Naive thymus-derived CD4-positive, alpha-beta T cell (primary cell): ENCODE measurements at regions of chr2 and their contacts with region 1.

Region 1: DNA sequence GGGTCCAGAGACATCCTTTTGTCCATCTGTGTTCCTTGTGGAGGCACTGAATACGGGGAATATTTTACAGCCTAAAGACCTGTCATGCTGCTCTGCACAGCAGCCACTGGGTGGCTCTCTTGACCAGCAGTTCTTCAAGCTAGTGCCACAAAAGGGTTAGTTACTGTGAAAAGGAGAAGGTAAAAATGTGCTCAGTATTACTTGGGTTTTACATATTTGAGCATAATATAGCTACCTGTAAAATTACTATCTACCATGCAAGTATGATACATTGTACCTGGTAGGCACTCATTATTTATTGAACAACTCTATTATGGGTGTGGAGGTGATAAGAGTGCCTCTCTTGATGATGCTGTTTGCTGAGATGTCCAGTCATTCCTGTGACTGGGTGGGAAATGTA is 23.6 kb downstream of the FZD5 start:
- DNase-seq: peak in 7 of 9 donors; percentile 17 to 50 (median 34)
- ATAC-seq: peak; percentile 85
- H3K4me3 ChIP-seq: no peak overlapping the region
- H3K4me3 Mint-ChIP-seq: no peak overlapping the region
- H3K27ac ChIP-seq: no peak overlapping the region
- H3K27ac Mint-ChIP-seq: peak overlapping the region in 1 of 9 donors; percentile 20
- H3K4me1 ChIP-seq: no peaks in the 10 kb centered on the region
- H3K4me1 Mint-ChIP-seq: no peaks in the 10 kb centered on the region
- H3K27me3 ChIP-seq: no peaks in the 10 kb centered on the region
- H3K27me3 Mint-ChIP-seq: no peaks in the 10 kb centered on the region

Region 2: GRCh38 chr2:207974216-207974605 is 228.1 kb after region 1 on chr2:
- CTCF ChIA-PET with region 1: interaction called, 5 read pairs
- POLR2A ChIA-PET with region 1: no interaction called
- intact Hi-C with region 1: loop called (anchors 1 kb)
- DNase-seq: no peak
- ATAC-seq: peak; percentile 34
- H3K4me3 ChIP-seq: no peak overlapping the region
- H3K4me3 Mint-ChIP-seq: no peak overlapping the region
- H3K27ac ChIP-seq: no peak overlapping the region
- H3K27ac Mint-ChIP-seq: peak overlapping the region in 2 of 9 donors; percentile 2 to 65
- H3K4me1 ChIP-seq: no peaks in the 10 kb centered on the region
- H3K4me1 Mint-ChIP-seq: peaks cover 5 to 43% (median 31%) of the 10 kb centered on the region in 7 donors
- H3K27me3 ChIP-seq: no peaks in the 10 kb centered on the region
- H3K27me3 Mint-ChIP-seq: no peaks in the 10 kb centered on the region

Region 3: DNA sequence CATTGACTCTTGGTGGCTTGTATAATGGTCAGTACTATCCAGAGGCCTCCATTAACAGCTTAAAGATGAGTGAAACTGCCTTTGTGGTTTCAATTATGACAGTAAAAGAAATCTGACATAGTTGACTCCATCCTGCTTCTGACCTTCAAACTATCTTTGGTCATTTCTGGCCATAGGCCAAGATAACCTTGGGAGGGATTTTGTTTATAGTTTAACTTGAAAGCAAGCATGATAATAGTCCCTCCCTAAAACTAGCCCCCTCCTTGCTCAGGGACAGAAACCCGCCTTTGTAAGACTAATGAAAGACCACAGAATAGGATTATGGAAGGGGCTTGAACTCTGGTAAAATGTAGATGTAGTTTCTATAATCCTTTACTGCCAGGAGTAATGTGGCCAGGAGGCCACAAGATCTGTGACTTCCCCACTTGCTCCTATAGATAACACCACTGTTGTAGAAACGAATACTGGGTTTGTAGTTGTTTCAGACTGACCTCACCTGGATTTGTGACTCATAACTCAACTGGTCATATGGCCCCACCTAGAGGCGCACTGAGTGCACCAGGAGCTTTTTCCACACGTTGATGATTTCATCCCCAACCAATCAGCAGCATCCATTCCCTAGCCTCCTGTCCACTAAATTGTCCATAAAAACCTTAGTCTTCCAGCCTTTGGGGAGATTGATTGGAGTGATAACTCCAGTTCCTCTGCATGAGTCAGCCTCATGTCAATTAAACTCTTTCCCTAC is 287.8 kb after region 1 on chr2:
- CTCF ChIA-PET with region 1: interaction called, 4 read pairs
- POLR2A ChIA-PET with region 1: no interaction called
- intact Hi-C with region 1: loop called (anchors 1 kb)
- DNase-seq: peak in 5 of 9 donors; percentile 12 to 32 (median 16)
- ATAC-seq: peak; percentile 53
- H3K4me3 ChIP-seq: no peak overlapping the region
- H3K4me3 Mint-ChIP-seq: no peak overlapping the region
- H3K27ac ChIP-seq: no peak overlapping the region
- H3K27ac Mint-ChIP-seq: no peak overlapping the region
- H3K4me1 ChIP-seq: no peaks in the 10 kb centered on the region
- H3K4me1 Mint-ChIP-seq: peaks cover 0 to 2% (median 0%) of the 10 kb centered on the region in 7 donors
- H3K27me3 ChIP-seq: no peaks in the 10 kb centered on the region
- H3K27me3 Mint-ChIP-seq: peaks cover 0 to 17% (median 0%) of the 10 kb centered on the region in 5 donors

Region 4: DNA sequence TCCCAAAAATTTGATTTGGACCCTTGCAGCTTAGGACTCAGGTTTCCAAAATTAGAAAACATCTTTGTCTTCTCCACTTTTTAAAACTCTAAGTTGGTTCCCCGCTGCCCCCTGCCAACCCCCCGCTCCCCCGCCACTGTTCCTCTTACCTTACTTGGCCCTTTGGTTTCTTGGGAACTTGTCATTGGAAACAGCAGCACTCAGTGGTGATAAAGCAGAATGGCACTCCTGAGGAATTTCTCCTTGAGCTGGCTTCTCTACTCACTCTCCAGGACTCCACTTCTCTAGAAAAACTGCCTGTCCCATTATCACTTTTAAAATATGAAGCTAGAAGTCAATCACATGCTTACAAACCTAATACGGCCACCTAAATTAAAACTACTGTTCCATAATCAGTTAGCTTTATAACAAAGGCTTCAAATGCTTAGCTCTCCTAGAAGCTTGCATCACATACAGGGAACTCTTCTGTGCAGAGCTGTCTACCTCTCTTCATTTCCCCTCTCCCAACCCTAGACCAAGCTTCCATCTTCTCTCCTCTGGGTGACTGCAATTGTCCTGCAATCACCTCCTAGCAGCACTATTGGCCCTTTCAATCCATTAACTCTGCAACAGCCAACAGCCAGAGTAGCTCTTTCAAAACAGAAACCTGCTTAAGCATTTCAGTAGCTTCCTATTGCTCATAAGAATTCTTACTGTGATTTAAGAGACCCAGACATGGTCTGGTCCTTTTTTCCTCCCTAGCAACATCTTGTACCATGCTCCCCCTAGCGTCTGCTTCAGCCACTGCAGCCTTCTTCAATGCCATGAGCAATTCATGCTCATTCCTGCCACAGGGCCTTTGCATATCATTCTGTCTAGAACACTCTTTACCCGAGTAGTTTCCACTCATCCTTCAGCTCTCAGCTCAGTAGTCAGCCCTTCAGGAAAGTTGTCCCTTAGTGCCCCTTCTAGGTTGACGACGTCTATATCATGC is 294.4 kb after region 1 on chr2:
- CTCF ChIA-PET with region 1: interaction called, 16 read pairs
- POLR2A ChIA-PET with region 1: no interaction called
- intact Hi-C with region 1: loop called (anchors 1 kb)
- DNase-seq: peak; percentile 21 to 67 (median 54)
- ATAC-seq: peak; percentile 77
- H3K4me3 ChIP-seq: no peak overlapping the region
- H3K4me3 Mint-ChIP-seq: no peak overlapping the region
- H3K27ac ChIP-seq: no peak overlapping the region
- H3K27ac Mint-ChIP-seq: peak overlapping the region in 1 of 9 donors; percentile 25
- H3K4me1 ChIP-seq: no peaks in the 10 kb centered on the region
- H3K4me1 Mint-ChIP-seq: no peaks in the 10 kb centered on the region
- H3K27me3 ChIP-seq: no peaks in the 10 kb centered on the region
- H3K27me3 Mint-ChIP-seq: peaks cover 0 to 10% (median 5%) of the 10 kb centered on the region in 5 donors

Region 5: DNA sequence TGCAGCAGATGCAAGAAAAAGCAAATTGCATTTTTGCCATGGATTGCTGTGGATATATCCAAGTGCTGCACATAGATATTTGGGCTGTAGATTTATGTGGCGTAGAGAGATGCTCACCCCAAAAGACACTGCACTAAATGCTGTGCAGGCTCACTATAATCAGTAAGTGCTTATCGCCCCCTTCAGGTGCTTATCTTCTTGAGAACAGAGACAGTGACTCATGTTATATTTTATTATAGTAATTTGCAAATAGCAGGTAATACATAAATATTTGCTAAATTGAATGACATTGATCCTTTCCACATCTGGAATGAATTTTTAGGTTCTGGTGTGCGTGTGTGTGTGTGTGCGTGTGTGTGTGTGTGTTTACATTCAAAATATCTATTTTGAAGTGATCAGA is 316.0 kb after region 1 on chr2:
- CTCF ChIA-PET with region 1: no interaction called
- POLR2A ChIA-PET with region 1: no interaction called
- intact Hi-C with region 1: loop called in 1 of 2 experiments (anchors 1 kb)
- DNase-seq: peak in 4 of 9 donors; percentile 11 to 23 (median 17)
- ATAC-seq: no peak
- H3K4me3 ChIP-seq: no peak overlapping the region
- H3K4me3 Mint-ChIP-seq: no peak overlapping the region
- H3K27ac ChIP-seq: no peak overlapping the region
- H3K27ac Mint-ChIP-seq: no peak overlapping the region
- H3K4me1 ChIP-seq: no peaks in the 10 kb centered on the region
- H3K4me1 Mint-ChIP-seq: peaks cover 0 to 2% (median 0%) of the 10 kb centered on the region in 7 donors
- H3K27me3 ChIP-seq: no peaks in the 10 kb centered on the region
- H3K27me3 Mint-ChIP-seq: peaks cover 0 to 10% (median 4%) of the 10 kb centered on the region in 5 donors